ENCODE measurements at regions of chr5 and their contacts with region 1.

Region 1: DNA sequence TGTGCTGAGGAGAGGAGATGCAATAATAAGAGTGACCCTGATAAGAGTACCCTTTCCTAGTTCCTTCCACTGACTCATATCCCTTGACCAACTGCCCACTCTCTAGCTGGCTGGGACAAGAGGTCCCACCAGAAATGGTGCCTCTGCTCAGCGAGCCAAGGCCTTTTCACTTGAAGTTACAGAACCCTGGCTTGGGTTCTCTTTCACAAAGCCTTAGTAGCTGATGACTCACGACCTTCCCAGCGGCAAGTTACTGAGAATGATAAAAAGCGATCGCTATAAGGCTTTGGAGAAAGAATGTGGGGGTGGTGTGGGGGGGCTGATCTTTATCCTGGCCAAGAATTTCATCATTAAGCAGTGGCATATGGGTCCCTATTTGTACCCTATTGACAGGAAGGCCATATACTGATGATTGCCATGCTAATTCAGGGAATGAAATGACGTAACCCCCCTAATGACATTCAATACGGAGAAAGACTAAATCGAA is 90.3 kb downstream of the FBXO38 start:
- DNase-seq: peak; percentile 35 to 72
- ATAC-seq: peak; percentile 74 to 92 (median 88)
- H3K4me3 ChIP-seq: peak overlapping the region in 1 of 10 donors; percentile 3
- H3K27ac ChIP-seq: peak overlapping the region in 9 of 10 donors; percentile 42 to 69 (median 60)
- H3K4me1 ChIP-seq: peaks cover 0 to 14% (median 9%) of the 10 kb centered on the region in 9 donors
- H3K27me3 ChIP-seq: peaks cover 0 to 5% (median 0%) of the 10 kb centered on the region in 7 donors
- CTCF ChIP-seq: no peak

Region 2: GRCh38 chr5:148202531-148203203 is 271.4 kb before region 1 on chr5 and contains the start of gene SPINK6:
- intact Hi-C with region 1: no loop called
- DNase-seq: no peak
- ATAC-seq: no peak
- H3K4me3 ChIP-seq: no peak within 1 kb of the TSS
- H3K27ac ChIP-seq: no peak within 1 kb of the TSS
- H3K4me1 ChIP-seq: peaks cover 0 to 16% (median 0%) of the 10 kb centered on the region in 9 donors
- H3K27me3 ChIP-seq: no peaks in the 10 kb centered on the region
- CTCF ChIP-seq: no peak
- total RNA-seq, gene SPINK6: not detected

Region 3: DNA sequence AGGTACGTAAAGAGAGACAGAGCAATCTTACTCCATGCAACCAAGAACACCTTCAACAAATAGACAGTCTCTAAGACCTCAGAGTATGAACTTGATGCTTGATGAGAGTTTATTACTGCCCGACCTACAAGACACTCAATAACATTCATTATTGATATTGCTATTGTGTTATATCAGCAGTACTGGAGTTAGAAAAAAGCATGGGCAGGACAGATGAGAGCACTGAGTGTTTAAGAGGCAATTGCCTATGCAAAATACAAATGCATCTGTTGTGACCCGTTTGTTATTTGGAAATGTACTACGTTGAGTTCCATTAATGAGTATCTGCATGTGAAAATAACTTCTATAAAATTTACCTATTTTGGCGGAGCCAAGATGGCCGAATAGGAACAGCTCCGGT is 243.8 kb before region 1 on chr5:
- intact Hi-C with region 1: no loop called
- DNase-seq: no peak
- ATAC-seq: no peak
- H3K4me3 ChIP-seq: no peak overlapping the region
- H3K27ac ChIP-seq: no peak overlapping the region
- H3K4me1 ChIP-seq: no peaks in the 10 kb centered on the region
- H3K27me3 ChIP-seq: no peaks in the 10 kb centered on the region
- CTCF ChIP-seq: no peak

Region 4: DNA sequence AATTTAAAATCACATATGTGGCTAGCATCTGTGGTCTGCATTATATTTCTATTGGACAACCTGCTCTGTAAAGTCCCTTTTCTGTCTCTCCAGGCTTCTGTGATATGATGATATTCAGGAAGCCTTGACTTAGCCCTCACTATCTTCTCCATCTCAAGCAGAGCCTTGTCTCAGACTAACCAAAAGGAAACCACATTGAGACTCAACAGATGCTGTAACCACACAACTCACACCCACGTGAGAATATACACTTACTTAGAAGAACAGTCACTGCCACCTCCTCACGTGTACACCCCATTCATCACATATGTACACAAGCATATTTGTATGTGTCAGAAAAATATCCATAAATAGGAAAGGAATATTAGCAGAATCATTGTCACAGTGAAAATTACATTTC is 146.6 kb after region 1 on chr5:
- intact Hi-C with region 1: loop called in 1 of 10 experiments (anchors 10 kb)
- DNase-seq: no peak
- ATAC-seq: peak in 1 of 8 donors; percentile 17
- H3K4me3 ChIP-seq: no peak overlapping the region
- H3K27ac ChIP-seq: no peak overlapping the region
- H3K4me1 ChIP-seq: peaks cover 0 to 10% (median 0%) of the 10 kb centered on the region in 9 donors
- H3K27me3 ChIP-seq: peaks cover 0 to 4% (median 0%) of the 10 kb centered on the region in 7 donors
- CTCF ChIP-seq: no peak

Region 5: GRCh38 chr5:148708854-148709253 is 234.8 kb after region 1 on chr5:
- intact Hi-C with region 1: loop called in 1 of 10 experiments (anchors 10 kb)
- DNase-seq: no peak
- ATAC-seq: no peak
- H3K4me3 ChIP-seq: no peak overlapping the region
- H3K27ac ChIP-seq: no peak overlapping the region
- H3K4me1 ChIP-seq: peaks cover 0 to 7% (median 0%) of the 10 kb centered on the region in 9 donors
- H3K27me3 ChIP-seq: no peaks in the 10 kb centered on the region
- CTCF ChIP-seq: no peak

Region 6: DNA sequence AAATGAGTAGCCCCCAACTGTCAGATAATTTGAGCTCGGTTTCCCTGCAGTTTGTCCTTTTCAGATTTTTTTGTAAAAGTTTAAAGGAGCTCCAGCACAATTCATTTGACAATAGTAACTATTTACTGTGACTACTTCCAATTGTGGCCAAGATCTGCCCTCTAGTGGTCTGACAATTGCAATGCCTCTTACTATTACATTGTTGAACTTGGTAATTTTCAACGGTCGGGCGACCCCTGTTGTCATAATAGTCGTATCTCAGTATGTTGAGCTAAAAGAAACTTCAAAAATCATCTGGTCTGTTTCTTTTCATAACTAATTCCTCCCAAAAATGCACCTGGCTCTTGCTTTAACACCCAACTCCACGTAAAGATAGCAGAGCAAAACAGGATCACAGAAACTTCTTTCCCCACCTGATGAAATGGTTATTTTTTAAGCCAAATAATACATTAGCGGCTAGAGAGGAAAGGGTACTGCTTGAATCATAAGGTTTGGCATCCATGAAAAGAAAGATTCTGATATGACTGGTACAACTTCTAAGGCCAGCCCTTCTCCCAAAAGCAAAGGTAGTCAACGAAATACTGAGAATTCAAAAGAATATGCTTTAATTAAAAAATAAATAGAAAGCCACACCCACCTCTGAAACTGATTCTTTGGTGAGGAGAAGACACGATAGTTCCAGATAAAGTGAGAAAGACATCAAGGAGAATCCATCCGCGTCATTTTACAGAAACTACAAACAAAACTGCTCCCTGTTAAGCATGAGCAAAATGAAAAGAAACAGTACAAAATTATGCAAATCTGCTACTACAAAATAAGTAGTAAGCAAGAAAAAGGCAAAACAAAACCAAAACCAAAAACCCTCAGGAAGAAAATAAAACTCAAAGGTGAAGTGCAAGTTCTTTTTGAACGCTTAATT is 257.1 kb after region 1 on chr5:
- intact Hi-C with region 1: no loop called
- DNase-seq: peak in 1 of 2 donors; percentile 88
- ATAC-seq: peak; percentile 61 to 90 (median 87)
- H3K4me3 ChIP-seq: peak overlapping the region in 3 of 10 donors; percentile 13 to 31 (median 22)
- H3K27ac ChIP-seq: no peak overlapping the region
- H3K4me1 ChIP-seq: peaks cover 0 to 27% (median 6%) of the 10 kb centered on the region in 9 donors
- H3K27me3 ChIP-seq: no peaks in the 10 kb centered on the region
- CTCF ChIP-seq: peak; percentile 88 to 99 (median 95)

Region 7: GRCh38 chr5:148912714-148913398 is 438.8 kb after region 1 on chr5:
- intact Hi-C with region 1: no loop called
- DNase-seq: no peak
- ATAC-seq: peak in 2 of 8 donors; percentile 20 to 27
- H3K4me3 ChIP-seq: no peak overlapping the region
- H3K27ac ChIP-seq: no peak overlapping the region
- H3K4me1 ChIP-seq: peaks cover 0 to 36% (median 16%) of the 10 kb centered on the region in 9 donors
- H3K27me3 ChIP-seq: no peaks in the 10 kb centered on the region
- CTCF ChIP-seq: peak in 4 of 9 donors; percentile 18 to 42 (median 35)

Measured in heart right ventricle (tissue), 16 donors.